ENCODE measurements at regions of chr12 and their contacts with region 1.

Region 1: DNA sequence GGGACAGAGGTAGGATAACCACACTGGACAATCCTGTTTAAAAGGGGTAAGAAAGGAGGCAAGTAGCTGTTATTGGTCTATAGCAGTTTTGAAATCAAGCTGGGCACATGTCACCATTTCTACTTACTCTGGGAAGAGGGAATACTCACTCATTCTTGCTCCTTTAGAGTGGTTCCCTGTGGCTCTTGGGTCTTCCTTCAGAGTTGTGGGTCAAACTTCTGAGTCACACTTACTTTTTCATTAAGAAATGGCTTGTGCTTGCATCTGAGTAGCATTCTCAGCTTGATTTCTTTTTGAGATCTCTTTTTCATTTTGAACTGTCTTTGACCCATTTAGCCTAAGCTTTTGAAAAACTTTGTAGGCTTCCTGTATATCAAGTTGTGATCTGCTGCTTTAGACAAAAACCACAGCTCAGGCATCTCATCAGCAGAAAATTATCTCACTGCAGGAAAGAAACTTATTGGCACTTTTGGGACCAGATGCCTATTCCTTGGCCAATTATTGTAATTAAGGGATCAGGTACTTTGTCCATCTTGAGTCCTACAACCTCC is 122.2 kb downstream of the AEBP2 start:
- DNase-seq: no peak
- H3K4me3 ChIP-seq: no peak overlapping the region
- H3K27ac ChIP-seq: no peak overlapping the region
- H3K4me1 ChIP-seq: peaks cover 0 to 4% of the 10 kb centered on the region in 2 donors
- H3K27me3 ChIP-seq: no peaks in the 10 kb centered on the region
- CTCF ChIP-seq: no peak

Region 2: GRCh38 chr12:19273482-19274330 is 287.8 kb before region 1 on chr12:
- intact Hi-C with region 1: no loop called
- DNase-seq: peak in 1 of 2 donors; percentile 79
- H3K4me3 ChIP-seq: no peak overlapping the region
- H3K27ac ChIP-seq: peak overlapping the region; percentile 15 to 37
- H3K4me1 ChIP-seq: peaks cover 0 to 8% of the 10 kb centered on the region in 2 donors
- H3K27me3 ChIP-seq: no peaks in the 10 kb centered on the region
- CTCF ChIP-seq: no peak

Region 3: GRCh38 chr12:19462406-19462805 is 99.1 kb before region 1 on chr12:
- intact Hi-C with region 1: no loop called
- DNase-seq: no peak
- H3K4me3 ChIP-seq: no peak overlapping the region
- H3K27ac ChIP-seq: no peak overlapping the region
- H3K4me1 ChIP-seq: peaks cover 0 to 11% of the 10 kb centered on the region in 2 donors
- H3K27me3 ChIP-seq: no peaks in the 10 kb centered on the region
- CTCF ChIP-seq: no peak

Region 4: DNA sequence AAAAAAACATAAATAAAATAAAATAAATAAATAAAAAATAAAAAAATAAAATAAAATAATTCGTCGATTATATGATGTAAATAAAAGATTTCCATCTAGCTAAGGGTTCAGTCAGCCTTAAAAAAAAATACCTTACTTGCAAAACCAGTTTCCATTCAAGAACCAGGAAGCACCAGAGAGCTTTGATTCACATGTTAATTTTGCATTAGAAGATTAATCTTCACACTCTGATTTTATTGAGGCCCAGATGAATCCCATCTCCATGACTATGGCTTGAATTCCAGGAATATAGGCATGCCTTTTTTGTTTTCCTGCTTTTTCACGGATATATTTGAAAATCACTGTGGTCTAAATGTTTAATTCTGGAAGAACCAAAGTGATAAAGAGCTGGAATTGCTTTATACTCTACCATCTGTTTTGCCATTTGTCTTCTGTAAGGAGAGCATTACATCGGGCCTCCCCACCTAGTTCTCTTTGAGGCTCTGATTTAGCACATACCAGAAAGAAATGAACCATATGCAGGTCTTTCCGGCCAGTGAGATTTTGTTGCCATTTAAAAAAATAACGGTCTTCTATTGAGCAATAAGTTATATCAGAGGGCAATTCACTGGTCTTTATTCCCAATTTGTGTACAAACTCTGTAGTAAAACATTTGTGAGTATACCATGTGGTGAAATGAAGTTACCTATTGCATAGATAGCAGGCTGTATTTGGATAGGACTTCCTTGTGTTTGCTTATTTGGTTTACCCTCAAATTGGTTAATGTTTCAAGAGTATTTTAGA is 53.3 kb after region 1 on chr12:
- intact Hi-C with region 1: loop called (anchors 10 kb)
- DNase-seq: no peak
- H3K4me3 ChIP-seq: no peak overlapping the region
- H3K27ac ChIP-seq: no peak overlapping the region
- H3K4me1 ChIP-seq: peaks cover 0 to 2% of the 10 kb centered on the region in 2 donors
- H3K27me3 ChIP-seq: no peaks in the 10 kb centered on the region
- CTCF ChIP-seq: no peak

Region 5: GRCh38 chr12:19757317-19757877 is 195.9 kb after region 1 on chr12:
- intact Hi-C with region 1: no loop called
- DNase-seq: no peak
- H3K4me3 ChIP-seq: no peak overlapping the region
- H3K27ac ChIP-seq: no peak overlapping the region
- H3K4me1 ChIP-seq: peaks cover 0 to 8% of the 10 kb centered on the region in 2 donors
- H3K27me3 ChIP-seq: no peaks in the 10 kb centered on the region
- CTCF ChIP-seq: peak; percentile 19 to 60 (median 40)